ENCODE measurements at regions of chr20 and their contacts with region 1.

Region 1: GRCh38 chr20:32779500-32780211 is 17.5 kb downstream of the DNMT3B start:
- DNase-seq: no peak
- H3K4me3 Mint-ChIP-seq: no peak overlapping the region
- H3K27ac Mint-ChIP-seq: no peak overlapping the region
- H3K4me1 Mint-ChIP-seq: peaks cover 21% of the 10 kb centered on the region
- H3K27me3 Mint-ChIP-seq: no peaks in the 10 kb centered on the region

Region 2: GRCh38 chr20:32079655-32080109 is 700.0 kb before region 1 on chr20:
- intact Hi-C with region 1: no loop called
- DNase-seq: no peak
- H3K4me3 Mint-ChIP-seq: no peak overlapping the region
- H3K27ac Mint-ChIP-seq: no peak overlapping the region
- H3K4me1 Mint-ChIP-seq: no peaks in the 10 kb centered on the region
- H3K27me3 Mint-ChIP-seq: peaks cover 2% of the 10 kb centered on the region

Region 3: GRCh38 chr20:32521780-32522525 is 257.7 kb before region 1 on chr20:
- intact Hi-C with region 1: loop called (anchors 1 kb)
- DNase-seq: peak; percentile 53
- H3K4me3 Mint-ChIP-seq: no peak overlapping the region
- H3K27ac Mint-ChIP-seq: peak overlapping the region; percentile 44
- H3K4me1 Mint-ChIP-seq: peaks cover 43% of the 10 kb centered on the region
- H3K27me3 Mint-ChIP-seq: no peaks in the 10 kb centered on the region

Region 4: DNA sequence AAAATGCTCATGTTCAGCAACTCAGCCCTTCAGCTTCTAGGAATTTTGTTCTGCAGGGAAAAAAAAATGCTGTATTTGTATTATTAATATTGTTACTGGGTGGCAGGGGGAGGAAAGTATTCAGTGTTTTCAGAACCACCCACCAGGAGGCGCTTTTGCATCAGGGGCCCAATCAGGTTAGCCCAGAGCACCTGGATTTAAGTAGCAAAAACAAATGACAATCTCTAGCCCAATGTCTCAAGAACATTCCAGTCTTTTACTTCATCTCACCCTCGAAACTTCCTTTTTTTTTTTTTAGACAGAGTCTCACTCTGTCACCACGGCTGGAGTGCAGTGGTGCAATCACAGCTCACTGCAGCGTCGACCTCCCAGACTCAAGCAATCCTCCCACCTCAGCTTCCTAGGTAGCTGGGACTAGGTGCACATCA is 105.3 kb before region 1 on chr20:
- intact Hi-C with region 1: loop called (anchors 1 kb)
- DNase-seq: peak; percentile 37
- H3K4me3 Mint-ChIP-seq: no peak overlapping the region
- H3K27ac Mint-ChIP-seq: no peak overlapping the region
- H3K4me1 Mint-ChIP-seq: peaks cover 7% of the 10 kb centered on the region
- H3K27me3 Mint-ChIP-seq: no peaks in the 10 kb centered on the region

Region 5: GRCh38 chr20:32871627-32872160 is 92.0 kb after region 1 on chr20:
- intact Hi-C with region 1: no loop called
- DNase-seq: no peak
- H3K4me3 Mint-ChIP-seq: no peak overlapping the region
- H3K27ac Mint-ChIP-seq: no peak overlapping the region
- H3K4me1 Mint-ChIP-seq: no peaks in the 10 kb centered on the region
- H3K27me3 Mint-ChIP-seq: no peaks in the 10 kb centered on the region

Measured in activated T-helper 1 cell treated with anti-CD3 and anti-CD28 coated beads, Interleukin-12 subunit alpha, Interleukin-12 subunit beta, Interleukin-2, Interleukin-4 antibody, amounts not matched to agents 30 ng/mL and 10 ng/mL and 1 ng/mL, durations not matched to agents 14 hours and 24 hours and 36 hours (primary cell).